ENCODE measurements at regions of chr3 and their contacts with region 1.

Region 1: GRCh38 chr3:119676771-119677640 is at the start of gene COX17:
- DNase-seq: peak; percentile 95
- H3K4me3 Mint-ChIP-seq: peak within 1 kb of the TSS; percentile 91
- H3K27ac Mint-ChIP-seq: peak within 1 kb of the TSS; percentile 96
- H3K4me1 Mint-ChIP-seq: peaks cover 44% of the 10 kb centered on the region
- H3K27me3 Mint-ChIP-seq: peaks cover 2% of the 10 kb centered on the region
- total RNA-seq, gene COX17: 62.2 and 70.7 TPM in 2 replicates

Region 2: DNA sequence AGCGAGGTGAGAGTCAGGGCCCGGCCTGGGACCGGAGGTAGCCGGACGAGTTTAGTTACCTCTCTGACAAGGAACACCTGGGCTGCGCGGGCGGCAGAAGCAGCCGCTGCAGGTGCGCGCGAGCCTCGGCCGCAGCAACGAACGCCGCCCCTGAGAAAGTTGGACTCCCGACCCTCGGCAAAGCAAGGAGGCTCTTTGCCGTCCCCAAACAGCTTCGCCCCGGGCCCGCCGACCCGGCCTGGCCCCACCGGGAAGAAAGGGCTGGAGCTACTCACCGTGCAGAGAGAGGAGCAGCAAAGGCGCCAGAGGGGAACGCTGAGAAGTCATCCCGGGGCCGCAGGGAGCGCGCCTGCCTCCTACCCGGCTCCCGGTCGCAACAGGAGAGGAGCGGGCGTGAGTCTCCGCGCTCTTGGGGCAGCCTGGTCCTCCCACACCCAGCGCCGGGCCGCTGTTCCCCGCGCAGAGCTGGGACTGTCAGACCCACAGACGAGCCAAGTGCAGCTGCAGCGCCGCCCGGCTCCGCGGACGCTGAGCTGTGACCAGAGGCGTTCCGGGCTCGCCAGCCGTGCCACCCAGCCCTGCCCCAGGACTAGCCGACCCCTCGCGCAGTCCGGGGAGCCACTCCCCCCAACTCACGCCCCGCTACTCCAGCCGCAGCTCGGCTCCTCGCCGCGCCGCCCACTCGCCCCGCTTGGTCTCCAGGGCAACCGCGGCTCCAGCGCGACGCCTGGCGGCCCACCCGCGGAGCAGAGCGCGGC is 642.6 kb before region 1 on chr3 and contains the start of gene IGSF11:
- intact Hi-C with region 1: loop called (anchors 10 kb)
- DNase-seq: peak; percentile 46
- H3K4me3 Mint-ChIP-seq: peak within 1 kb of the TSS; percentile 83
- H3K27ac Mint-ChIP-seq: no peak within 1 kb of the TSS
- H3K4me1 Mint-ChIP-seq: peaks cover 6% of the 10 kb centered on the region
- H3K27me3 Mint-ChIP-seq: peaks cover 54% of the 10 kb centered on the region
- total RNA-seq, gene IGSF11: 0.18 TPM in 1 of 2 replicates, not detected in the other

Region 3: DNA sequence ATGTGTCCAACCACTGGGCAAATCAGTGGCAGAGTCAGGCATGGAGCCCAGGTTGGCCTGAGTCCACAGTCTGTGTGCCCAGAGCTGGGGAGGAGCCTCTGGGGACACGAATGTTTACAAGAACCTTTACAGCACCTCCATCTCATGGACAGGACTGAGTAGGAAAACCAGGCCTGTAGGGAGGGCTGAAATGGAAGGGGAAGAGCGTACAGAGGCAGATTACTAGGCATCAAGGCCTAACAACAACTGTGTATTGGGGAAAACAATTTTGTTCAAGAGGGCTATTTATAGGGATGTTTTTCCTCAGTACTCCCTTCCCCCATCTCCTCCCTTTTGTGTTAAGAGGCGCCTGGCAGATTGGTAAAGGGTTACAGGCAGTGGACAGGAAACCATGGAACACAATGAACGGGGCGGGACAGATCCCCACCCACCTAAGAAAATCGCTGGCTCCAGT is 397.9 kb before region 1 on chr3:
- intact Hi-C with region 1: loop called (anchors 1 kb)
- DNase-seq: no peak
- H3K4me3 Mint-ChIP-seq: no peak overlapping the region
- H3K27ac Mint-ChIP-seq: no peak overlapping the region
- H3K4me1 Mint-ChIP-seq: peaks cover 5% of the 10 kb centered on the region
- H3K27me3 Mint-ChIP-seq: peaks cover 7% of the 10 kb centered on the region

Region 4: DNA sequence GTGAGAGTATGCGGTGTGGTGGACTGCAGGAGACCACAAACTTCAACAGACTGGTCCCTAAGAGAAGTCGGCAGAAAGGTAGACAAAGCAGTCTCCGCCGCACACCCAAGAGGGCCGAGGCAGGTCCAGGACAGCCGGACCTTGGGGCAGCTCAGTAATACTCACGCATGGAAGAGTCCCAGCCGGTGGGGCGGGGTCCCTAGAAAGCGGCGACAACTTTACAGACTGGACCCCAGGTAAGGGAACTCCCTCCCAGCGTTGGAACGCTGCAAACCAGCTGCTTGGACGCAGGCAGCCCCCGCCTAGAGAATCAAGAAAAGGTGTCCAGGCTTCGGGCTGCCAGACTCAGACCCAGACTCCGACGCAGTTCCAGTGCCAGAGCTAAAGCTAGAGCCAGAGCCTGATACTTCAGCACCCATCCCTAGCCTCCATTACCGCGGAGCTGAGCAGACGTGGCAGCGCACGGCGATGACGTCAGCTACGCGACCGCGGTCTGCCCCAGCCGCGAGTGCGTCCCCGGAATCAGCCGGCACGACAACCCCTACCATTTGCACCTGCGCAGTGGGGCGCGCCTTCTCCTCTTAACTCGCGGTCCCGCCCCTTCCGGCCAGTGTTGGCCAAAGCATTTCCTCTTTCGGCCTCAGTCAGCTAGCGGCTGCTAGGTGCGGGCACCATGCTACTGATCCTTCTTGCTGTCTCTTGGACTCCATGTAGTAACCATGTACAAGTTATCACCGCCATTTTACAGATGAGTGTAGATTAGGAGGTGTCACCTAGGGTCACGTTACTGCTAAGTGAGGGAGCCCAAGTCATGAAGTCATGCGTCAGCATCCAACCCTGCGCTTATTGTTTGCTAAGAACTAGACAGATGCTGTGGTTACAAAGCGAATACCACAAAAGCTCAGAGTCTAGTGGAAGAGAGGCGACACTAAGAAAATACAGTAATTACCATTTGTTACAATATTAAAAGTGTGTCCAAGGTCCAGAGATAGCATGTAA is 213.5 kb before region 1 on chr3 and contains the start of gene TMEM39A:
- intact Hi-C with region 1: loop called (anchors 1 kb)
- DNase-seq: peak; percentile 98
- H3K4me3 Mint-ChIP-seq: peak within 1 kb of the TSS; percentile 98
- H3K27ac Mint-ChIP-seq: peak within 1 kb of the TSS; percentile 97
- H3K4me1 Mint-ChIP-seq: peaks cover 49% of the 10 kb centered on the region
- H3K27me3 Mint-ChIP-seq: peaks cover 3% of the 10 kb centered on the region
- total RNA-seq, gene TMEM39A: 51.3 and 56.9 TPM in 2 replicates

Region 5: GRCh38 chr3:119559441-119559963 is 117.5 kb before region 1 on chr3 and contains the start of gene CD80:
- intact Hi-C with region 1: loop called (anchors 1 kb)
- DNase-seq: peak; percentile 67
- H3K4me3 Mint-ChIP-seq: peak within 1 kb of the TSS; percentile 79
- H3K27ac Mint-ChIP-seq: peak within 1 kb of the TSS; percentile 88
- H3K4me1 Mint-ChIP-seq: peaks cover 73% of the 10 kb centered on the region
- H3K27me3 Mint-ChIP-seq: peaks cover 4% of the 10 kb centered on the region
- total RNA-seq, gene CD80: 18.1 and 19.5 TPM in 2 replicates

Region 6: GRCh38 chr3:119637679-119638525 is 39.1 kb before region 1 on chr3:
- intact Hi-C with region 1: loop called (anchors 1 kb)
- DNase-seq: no peak
- H3K4me3 Mint-ChIP-seq: peak overlapping the region; percentile 47
- H3K27ac Mint-ChIP-seq: peak overlapping the region; percentile 89
- H3K4me1 Mint-ChIP-seq: peaks cover 45% of the 10 kb centered on the region
- H3K27me3 Mint-ChIP-seq: peaks cover under 1% of the 10 kb centered on the region

Region 7: DNA sequence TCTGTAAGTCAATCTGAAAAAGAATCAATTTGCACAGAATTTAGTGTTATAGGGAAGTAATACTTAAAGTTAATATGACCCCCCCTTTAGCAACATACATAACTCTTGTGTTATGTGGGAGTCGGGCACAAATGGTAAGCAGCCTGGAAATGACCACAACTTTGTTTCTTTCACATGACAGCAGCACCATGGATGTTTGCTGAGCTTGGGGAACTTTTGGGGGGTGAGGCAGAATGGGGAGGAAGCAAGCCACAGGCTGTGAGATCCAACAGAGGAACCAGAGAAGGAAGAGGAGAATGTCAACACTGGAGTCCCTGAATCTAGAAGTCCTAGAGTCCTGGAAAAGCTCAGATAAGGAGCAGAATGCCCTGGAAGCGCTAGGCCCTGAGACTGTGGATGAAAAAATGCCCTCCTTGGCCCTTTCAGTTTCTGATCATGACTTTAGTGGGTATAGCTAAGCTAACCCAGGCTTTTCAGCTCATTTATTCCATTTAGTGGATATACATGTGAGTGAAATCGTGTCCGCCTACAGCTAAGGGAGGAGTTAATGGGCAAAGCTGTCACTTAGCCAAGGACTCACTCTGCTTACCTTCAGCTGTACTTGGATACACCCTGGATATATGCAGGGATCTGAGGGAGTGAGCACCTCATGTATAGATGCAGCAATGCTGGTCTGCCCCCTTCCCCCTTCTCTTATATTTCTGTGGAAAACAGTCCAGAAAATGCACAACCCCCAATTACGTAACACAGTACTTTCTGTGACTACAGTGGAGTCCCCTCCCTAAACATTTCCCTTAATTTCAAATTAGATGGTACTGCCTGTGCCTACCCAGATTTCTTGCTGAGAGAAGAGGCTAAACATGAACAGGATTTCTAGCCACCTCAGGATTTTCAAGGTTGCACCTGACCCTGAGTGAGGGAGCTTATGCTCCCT is 64.9 kb after region 1 on chr3:
- intact Hi-C with region 1: no loop called
- DNase-seq: no peak
- H3K4me3 Mint-ChIP-seq: no peak overlapping the region
- H3K27ac Mint-ChIP-seq: no peak overlapping the region
- H3K4me1 Mint-ChIP-seq: no peaks in the 10 kb centered on the region
- H3K27me3 Mint-ChIP-seq: peaks cover 19% of the 10 kb centered on the region

Region 8: GRCh38 chr3:121545574-121546455 is 1868.8 kb after region 1 on chr3 and contains the start of gene POLQ:
- intact Hi-C with region 1: loop called (anchors 2 kb)
- DNase-seq: peak; percentile 83
- H3K4me3 Mint-ChIP-seq: peak within 1 kb of the TSS; percentile 89
- H3K27ac Mint-ChIP-seq: peak within 1 kb of the TSS; percentile 88
- H3K4me1 Mint-ChIP-seq: peaks cover 32% of the 10 kb centered on the region
- H3K27me3 Mint-ChIP-seq: peaks cover 2% of the 10 kb centered on the region
- total RNA-seq, gene POLQ: 29.0 and 30.1 TPM in 2 replicates

Measured in activated T-helper 1 cell treated with anti-CD3 and anti-CD28 coated beads, Interleukin-12 subunit alpha, Interleukin-12 subunit beta, Interleukin-2, Interleukin-4 antibody, amounts not matched to agents 30 ng/mL and 10 ng/mL and 1 ng/mL, durations not matched to agents 14 hours and 24 hours and 36 hours (primary cell).